IMR-90 (cell line): ENCODE measurements at regions of chr3 and their contacts with region 1.

Region 1: DNA sequence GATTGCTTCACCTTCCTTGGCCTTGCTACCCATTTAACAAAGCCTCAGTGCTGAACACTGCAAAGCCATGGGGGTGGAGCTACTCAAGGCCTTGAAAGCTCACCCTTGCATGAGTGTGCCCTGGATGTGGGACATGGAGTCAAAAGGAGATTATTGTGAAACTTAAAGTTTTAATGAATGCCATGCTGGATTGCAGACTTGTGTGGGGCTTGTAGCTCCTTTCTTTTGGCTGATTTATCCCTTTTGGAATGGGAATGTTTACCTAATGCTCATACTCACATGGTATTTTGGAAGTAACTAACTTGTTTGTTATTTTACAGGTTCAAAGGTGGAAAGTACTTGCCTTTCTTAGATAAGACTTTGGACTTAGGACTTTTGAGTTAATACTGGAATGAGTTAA is 538.5 kb upstream of the NECTIN3 start:
- DNase-seq: peak; percentile 78
- ATAC-seq: peak; percentile 87
- H3K4me3 ChIP-seq: no peak overlapping the region
- H3K27ac ChIP-seq: peak overlapping the region; percentile 34; the same call in 1 of the 2 replicates
- H3K4me1 ChIP-seq: peaks cover 10% of the 10 kb centered on the region
- H3K27me3 ChIP-seq: no peaks in the 10 kb centered on the region
- CTCF ChIP-seq: no peak
- POLR2A ChIP-seq: no peak
- RAD21 ChIP-seq: no peak

Region 2: GRCh38 chr3:110568246-110568645 is 35.2 kb after region 1 on chr3:
- CTCF ChIA-PET with region 1: no interaction called
- POLR2A ChIA-PET with region 1: no interaction called
- dilution Hi-C with region 1: no loop called
- in situ Hi-C with region 1: no loop called
- intact Hi-C with region 1: loop called (anchors 5 kb)
- DNase-seq: peak; percentile 94
- ATAC-seq: peak; percentile 81
- H3K4me3 ChIP-seq: no peak overlapping the region
- H3K27ac ChIP-seq: peak overlapping the region; percentile 46; the same call in 1 of the 2 replicates
- H3K4me1 ChIP-seq: peaks cover 6% of the 10 kb centered on the region; the same call in 1 of the 2 replicates
- H3K27me3 ChIP-seq: no peaks in the 10 kb centered on the region
- CTCF ChIP-seq: no peak
- POLR2A ChIP-seq: no peak
- RAD21 ChIP-seq: peak; percentile 4; the same call in 1 of the 2 replicates

Region 3: GRCh38 chr3:110773413-110773954 is 240.4 kb after region 1 on chr3:
- CTCF ChIA-PET with region 1: no interaction called
- POLR2A ChIA-PET with region 1: no interaction called
- dilution Hi-C with region 1: no loop called
- in situ Hi-C with region 1: no loop called
- intact Hi-C with region 1: loop called (anchors 5 kb)
- DNase-seq: peak; percentile 98
- ATAC-seq: peak; percentile 92
- H3K4me3 ChIP-seq: no peak overlapping the region
- H3K27ac ChIP-seq: peak overlapping the region; percentile 80
- H3K4me1 ChIP-seq: peaks cover 7% of the 10 kb centered on the region; the same call in 1 of the 2 replicates
- H3K27me3 ChIP-seq: no peaks in the 10 kb centered on the region
- CTCF ChIP-seq: no peak
- POLR2A ChIP-seq: no peak
- RAD21 ChIP-seq: no peak; the same call in 1 of the 2 replicates